ENCODE measurements at regions of chr5 and their contacts with region 1.

Region 1: DNA sequence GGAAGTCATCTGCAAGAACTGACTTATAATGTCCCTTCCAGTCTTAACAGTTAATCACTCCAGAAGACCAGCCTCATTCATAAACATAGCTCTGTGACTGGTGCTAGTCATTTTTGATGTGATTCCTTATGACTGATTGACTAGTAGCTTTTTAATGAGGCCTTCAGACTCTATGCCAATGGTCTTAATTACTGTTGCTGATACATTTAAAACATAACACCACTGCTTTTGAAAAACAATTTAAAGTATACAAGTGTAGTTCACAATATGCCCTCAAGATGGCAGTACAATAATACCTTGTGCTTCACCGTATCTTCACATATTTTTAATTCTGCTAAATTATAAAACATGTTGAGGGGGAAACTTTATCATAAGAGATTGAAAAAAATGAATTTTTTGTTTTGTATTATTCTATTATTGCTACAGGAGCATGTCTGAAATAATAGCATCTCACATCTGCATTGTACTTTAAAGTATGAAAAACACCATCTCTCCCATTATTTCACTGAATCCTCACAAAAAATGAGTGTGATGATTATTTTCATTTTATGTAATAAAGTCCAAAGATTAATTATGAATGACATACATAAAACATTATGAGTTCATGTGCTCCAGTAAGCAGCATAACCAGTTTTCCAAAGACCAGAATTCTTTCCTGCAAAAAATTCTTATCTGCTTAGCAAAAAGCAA is 55.2 kb upstream of the SHISAL2B start:
- DNase-seq: no peak
- ATAC-seq: no peak

Region 2: GRCh38 chr5:64784451-64785025 is 149.4 kb after region 1 on chr5:
- intact Hi-C with region 1: loop called (anchors 2 kb)
- DNase-seq: peak; percentile 36
- ATAC-seq: peak; percentile 63

Region 3: DNA sequence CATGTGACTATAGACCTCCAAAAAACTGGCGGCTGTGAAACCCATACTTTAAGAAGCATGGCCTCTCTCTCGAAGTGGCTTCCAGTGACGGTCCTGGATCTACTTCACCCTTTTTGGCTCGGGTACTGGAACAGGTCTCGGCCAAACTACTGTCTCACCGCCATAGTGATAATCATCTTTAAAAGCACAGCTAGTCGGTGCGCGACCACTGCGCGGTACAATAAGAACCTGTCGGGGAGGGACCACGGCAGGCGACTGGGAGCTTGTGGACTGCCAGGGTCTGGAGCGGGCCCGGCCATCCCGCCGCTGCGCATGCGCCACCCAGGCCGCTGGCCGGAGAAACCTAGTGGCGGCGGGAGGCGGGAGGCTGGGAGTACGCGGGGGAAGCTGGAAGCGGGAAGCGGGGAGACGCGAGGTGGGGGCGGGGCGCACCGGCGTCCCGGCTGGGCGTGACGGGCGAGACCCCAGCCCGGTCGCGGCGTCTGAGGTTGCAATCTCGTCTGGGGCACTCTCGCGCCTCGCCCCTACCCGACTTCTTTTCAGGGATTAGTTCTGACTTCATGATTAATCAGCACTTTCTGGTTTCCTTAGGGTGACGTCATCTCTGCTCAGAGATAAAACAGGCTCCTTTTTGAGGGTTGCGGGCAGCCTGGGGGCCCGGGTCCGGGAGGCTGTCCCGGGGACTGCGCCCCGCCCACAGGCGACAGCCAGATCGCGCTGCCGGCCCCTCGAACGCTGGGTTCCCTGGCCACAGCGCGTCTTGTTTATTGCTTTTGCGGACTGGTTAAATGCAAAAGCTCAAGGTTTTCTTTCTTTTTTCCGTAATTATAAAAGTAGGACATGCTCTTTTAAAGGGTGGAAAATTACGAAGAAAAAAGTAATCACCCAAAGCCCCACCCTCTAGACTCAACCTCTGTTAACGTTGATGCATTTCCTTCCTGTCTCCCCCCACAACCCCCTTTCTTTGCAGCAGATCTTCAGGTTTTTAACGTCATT is 400.4 kb after region 1 on chr5:
- intact Hi-C with region 1: no loop called
- DNase-seq: peak; percentile 94
- ATAC-seq: peak; percentile 96